ENCODE measurements at regions of chr2 and their contacts with region 1.

Region 1: DNA sequence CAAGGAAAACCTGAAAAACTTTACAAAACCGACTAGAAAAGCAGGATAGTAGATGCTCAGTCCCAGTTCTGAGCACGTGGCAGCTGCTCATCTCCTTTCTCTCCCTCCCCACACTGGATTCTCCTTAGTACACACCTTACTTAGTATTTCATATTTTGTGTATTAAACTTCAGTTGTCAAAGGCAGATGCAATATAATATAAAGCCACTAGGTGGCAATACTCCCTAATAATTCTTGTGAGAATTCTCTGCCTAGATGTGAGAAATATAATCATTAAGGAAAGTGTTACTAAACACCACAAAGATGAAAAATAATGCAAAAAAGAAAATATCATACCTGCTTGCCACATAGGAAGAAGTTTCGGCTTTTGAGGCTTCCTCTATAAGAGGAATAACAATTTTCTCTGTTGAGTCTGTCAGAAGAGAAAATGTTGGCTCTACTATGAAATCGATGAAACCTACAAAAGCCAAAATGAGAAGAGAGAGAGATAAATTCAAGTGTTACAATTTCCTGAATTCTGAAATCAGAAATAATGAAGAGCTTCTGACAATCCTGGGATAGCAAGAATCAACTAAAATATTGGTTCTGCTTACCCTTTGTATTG is 200.6 kb downstream of the PPP1R1C start:
- DNase-seq: no peak
- H3K4me3 ChIP-seq: no peak overlapping the region
- H3K27ac ChIP-seq: no peak overlapping the region
- H3K4me1 ChIP-seq: no peaks in the 10 kb centered on the region
- H3K27me3 ChIP-seq: no peaks in the 10 kb centered on the region
- CTCF ChIP-seq: peak; percentile 70 to 86 (median 72)
- EP300 ChIP-seq: no peak
- POLR2A ChIP-seq: no peak

Region 2: GRCh38 chr2:182426082-182426917 is 240.1 kb after region 1 on chr2:
- intact Hi-C with region 1: loop called (anchors 10 kb)
- DNase-seq: no peak
- H3K4me3 ChIP-seq: peak overlapping the region; percentile 27 to 50 (median 46)
- H3K27ac ChIP-seq: peak overlapping the region; percentile 63 to 76 (median 70)
- H3K4me1 ChIP-seq: peaks cover 0 to 18% (median 8%) of the 10 kb centered on the region in 4 donors
- H3K27me3 ChIP-seq: no peaks in the 10 kb centered on the region
- CTCF ChIP-seq: no peak
- EP300 ChIP-seq: no peak
- POLR2A ChIP-seq: no peak

Region 3: GRCh38 chr2:182650704-182651103 is 464.5 kb after region 1 on chr2:
- intact Hi-C with region 1: loop called (anchors 1 kb)
- DNase-seq: no peak
- H3K4me3 ChIP-seq: no peak overlapping the region
- H3K27ac ChIP-seq: no peak overlapping the region
- H3K4me1 ChIP-seq: no peaks in the 10 kb centered on the region
- H3K27me3 ChIP-seq: no peaks in the 10 kb centered on the region
- CTCF ChIP-seq: peak; percentile 26 to 52 (median 48)
- EP300 ChIP-seq: no peak
- POLR2A ChIP-seq: no peak

Measured in sigmoid colon (tissue), 7 donors.